IMR-90 (cell line): ENCODE measurements at regions of chr10 and their contacts with region 1.

Region 1: DNA sequence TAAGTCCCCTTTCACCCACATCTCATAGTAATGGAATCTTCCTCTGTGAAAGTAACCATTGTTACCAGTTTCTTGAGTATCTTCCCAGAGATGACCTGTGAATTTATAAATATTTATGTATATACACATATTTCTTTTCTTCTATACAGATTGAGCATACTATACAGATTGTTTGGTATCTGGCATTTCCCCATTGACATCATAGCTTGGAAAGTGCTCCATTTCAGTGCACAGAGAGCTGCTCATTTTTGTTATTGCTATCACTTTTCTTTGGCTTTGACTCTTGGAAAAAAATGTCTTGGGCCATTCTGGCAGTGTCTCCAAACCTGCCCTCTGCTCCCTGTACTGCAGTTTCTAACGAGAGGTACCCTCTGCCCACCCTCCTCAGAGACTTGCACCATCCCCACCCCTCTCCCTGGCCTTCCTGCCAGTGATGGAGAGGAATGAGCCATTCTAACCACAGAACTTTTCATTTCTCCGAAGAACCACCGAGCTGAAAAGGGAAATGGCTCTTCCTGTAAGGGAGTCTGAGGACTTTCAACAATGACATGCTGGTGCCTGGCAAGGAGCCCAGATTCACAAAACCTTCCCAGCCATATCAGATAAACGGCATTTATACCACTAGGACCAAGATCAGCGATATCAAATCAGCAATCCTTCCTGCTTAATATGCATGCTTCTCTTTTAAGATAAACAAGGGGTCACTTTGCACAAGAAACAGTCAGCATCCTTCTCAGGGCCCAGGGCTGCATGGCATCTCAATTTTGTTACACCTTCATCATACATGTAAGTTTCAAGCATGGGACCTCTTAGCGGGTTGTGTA is 19.7 kb upstream of the CCSER2 start:
- DNase-seq: peak; percentile 92
- ATAC-seq: peak; percentile 83
- H3K4me3 ChIP-seq: peak overlapping the region; percentile 12
- H3K27ac ChIP-seq: peak overlapping the region; percentile 89
- H3K4me1 ChIP-seq: peaks cover 24% of the 10 kb centered on the region
- H3K27me3 ChIP-seq: no peaks in the 10 kb centered on the region
- CTCF ChIP-seq: no peak
- POLR2A ChIP-seq: 0 out of 2 replicates have a peak, but pooled peaks have one; percentile 22
- RAD21 ChIP-seq: no peak

Region 2: DNA sequence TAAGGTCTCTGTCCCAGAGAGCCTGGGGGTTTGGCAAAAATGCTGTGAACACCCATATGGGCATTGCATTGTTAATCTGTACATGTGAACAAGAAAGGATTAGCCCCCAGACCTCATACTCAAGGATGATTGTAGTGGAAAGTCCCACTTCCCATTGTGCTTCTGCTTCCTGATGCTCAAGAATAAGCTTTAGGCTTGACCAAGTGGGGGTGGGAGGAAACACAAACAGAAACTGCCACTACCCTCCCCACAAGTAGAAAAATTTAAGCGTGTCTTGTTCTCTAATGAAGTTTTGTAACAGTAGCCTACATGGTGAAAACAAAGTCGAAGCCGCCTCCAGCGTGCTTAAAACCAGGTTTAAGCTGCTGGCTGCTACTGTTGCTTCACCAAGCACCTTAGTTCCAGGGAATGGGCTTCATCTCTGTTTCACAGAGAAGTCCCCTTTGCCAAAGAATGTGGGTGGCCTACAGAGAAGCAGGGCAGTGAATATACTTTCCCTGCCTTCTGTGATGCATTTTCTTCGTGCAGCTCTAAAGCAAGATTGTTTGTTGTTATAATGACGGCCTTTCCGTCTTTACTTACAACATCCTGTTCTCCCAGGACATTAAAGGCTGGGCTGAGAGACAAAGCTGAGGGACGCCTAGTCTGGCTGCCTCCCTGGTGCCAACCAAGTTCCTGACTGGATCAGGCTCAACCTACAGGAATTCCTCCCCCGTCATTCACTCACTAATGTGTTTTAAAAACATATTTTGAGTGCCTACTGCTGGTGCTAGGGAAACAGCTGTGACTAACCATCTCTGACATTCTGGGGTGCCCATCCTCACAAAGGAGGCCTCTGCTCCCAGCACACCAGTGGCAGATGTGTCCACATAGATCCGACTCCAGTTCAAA is 12.4 kb before region 1 on chr10:
- CTCF ChIA-PET with region 1: interaction called, 4 read pairs
- POLR2A ChIA-PET with region 1: no interaction called
- dilution Hi-C with region 1: no loop called
- in situ Hi-C with region 1: no loop called
- intact Hi-C with region 1: loop called (anchors 1 kb)
- DNase-seq: peak; percentile 98
- ATAC-seq: peak; percentile 94
- H3K4me3 ChIP-seq: no peak overlapping the region
- H3K27ac ChIP-seq: peak overlapping the region; percentile 62
- H3K4me1 ChIP-seq: peaks cover 13% of the 10 kb centered on the region
- H3K27me3 ChIP-seq: no peaks in the 10 kb centered on the region
- CTCF ChIP-seq: no peak
- POLR2A ChIP-seq: peak; percentile 73
- RAD21 ChIP-seq: peak; percentile 15

Region 3: DNA sequence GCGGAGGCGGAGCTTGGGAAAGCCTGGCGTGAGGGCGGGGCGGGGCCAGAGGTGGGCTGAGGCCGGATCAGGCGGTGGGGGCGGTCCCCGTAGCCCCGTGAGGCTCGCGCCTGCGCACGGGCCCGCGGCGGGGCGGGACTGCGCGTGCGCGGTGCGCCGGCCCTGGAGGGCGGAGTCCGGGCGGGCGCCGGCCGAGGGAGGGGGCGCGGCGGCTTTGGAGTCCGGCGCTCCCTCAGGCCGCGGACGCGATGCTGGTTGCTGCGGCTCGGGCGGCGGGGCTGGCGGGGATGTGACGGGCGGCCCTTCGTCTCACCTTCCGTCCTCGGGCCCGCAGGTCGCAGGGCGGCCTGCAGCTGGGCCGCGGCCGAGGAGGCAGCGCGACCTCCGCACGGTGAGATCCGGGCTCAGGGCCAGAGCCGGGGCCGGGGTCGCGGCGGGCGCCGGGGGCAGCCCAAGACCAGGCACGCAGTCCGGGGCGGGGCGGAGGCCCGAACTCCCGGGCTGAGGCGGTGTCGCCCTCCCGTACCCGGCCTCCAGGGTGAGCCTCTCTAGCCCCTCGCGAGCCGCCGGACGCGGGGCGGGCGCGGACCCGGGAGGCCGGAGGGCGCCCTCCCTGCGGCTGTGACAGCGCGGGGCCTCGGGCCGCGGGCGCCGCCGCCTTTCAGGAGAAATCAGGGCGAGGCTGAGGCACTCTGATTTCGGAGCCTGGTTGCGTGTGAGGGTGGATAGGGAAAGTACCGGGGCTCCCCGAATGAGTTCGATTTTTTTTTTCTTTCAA is 19.9 kb after region 1 on chr10 and contains the start of gene CCSER2:
- CTCF ChIA-PET with region 1: no interaction called
- POLR2A ChIA-PET with region 1: no interaction called
- dilution Hi-C with region 1: no loop called
- in situ Hi-C with region 1: no loop called
- intact Hi-C with region 1: loop called (anchors 1 kb)
- DNase-seq: no peak
- ATAC-seq: peak; percentile 94
- H3K4me3 ChIP-seq: peak within 1 kb of the TSS; percentile 96
- H3K27ac ChIP-seq: peak within 1 kb of the TSS; percentile 90
- H3K4me1 ChIP-seq: peaks cover 2% of the 10 kb centered on the region; the same call in 1 of the 2 replicates
- H3K27me3 ChIP-seq: no peaks in the 10 kb centered on the region
- CTCF ChIP-seq: no peak
- POLR2A ChIP-seq: peak; percentile 95
- RAD21 ChIP-seq: no peak
- total RNA-seq, gene CCSER2: 27.8 and 31.7 TPM in 2 replicates

Region 4: DNA sequence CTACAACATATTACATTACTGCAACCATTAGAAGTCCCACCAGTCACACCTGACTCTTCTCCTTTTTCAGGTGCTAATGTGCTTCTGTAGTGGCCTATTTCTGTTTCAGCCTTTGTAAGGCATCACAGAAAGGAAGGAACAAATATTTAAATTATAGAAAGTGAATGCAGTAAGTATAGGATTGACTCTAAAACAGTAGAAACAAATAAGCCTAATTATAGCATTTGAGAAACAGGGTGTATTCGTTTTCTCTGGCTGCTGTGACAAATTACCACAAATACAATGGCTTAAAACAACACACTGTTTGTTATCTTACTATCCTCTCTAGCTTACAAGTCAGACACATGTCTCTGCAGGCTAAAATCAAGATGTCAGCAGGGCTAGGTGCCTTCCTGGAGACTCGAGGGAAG is 89.0 kb after region 1 on chr10:
- CTCF ChIA-PET with region 1: no interaction called
- POLR2A ChIA-PET with region 1: no interaction called
- dilution Hi-C with region 1: no loop called
- in situ Hi-C with region 1: no loop called
- intact Hi-C with region 1: no loop called
- DNase-seq: no peak
- ATAC-seq: no peak
- H3K4me3 ChIP-seq: no peak overlapping the region
- H3K27ac ChIP-seq: no peak overlapping the region
- H3K4me1 ChIP-seq: peaks cover 2% of the 10 kb centered on the region; the same call in 1 of the 2 replicates
- H3K27me3 ChIP-seq: no peaks in the 10 kb centered on the region
- CTCF ChIP-seq: no peak
- POLR2A ChIP-seq: no peak
- RAD21 ChIP-seq: no peak

Region 5: DNA sequence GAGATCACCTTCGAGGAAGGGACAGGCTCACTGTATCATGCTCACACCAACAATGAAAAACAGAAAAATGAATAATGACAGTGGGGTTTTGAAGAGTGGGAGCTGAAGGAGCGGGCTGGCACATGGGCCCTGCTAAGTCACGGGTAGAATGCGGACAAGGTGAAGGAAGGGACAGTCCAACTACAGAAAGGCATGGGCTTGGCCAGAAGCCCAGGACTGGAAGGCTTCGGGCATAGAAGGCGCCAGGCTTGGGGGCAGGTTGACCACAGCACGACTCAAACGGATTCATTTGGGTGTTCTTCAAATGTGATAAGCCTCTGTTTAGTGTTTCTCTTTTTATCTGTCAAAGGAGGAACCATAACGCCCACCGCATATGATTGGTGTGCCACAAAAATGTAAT is 529.2 kb after region 1 on chr10:
- CTCF ChIA-PET with region 1: no interaction called
- POLR2A ChIA-PET with region 1: no interaction called
- dilution Hi-C with region 1: no loop called
- in situ Hi-C with region 1: no loop called
- intact Hi-C with region 1: no loop called
- DNase-seq: no peak
- ATAC-seq: no peak
- H3K4me3 ChIP-seq: no peak overlapping the region
- H3K27ac ChIP-seq: no peak overlapping the region
- H3K4me1 ChIP-seq: no peaks in the 10 kb centered on the region
- H3K27me3 ChIP-seq: no peaks in the 10 kb centered on the region
- CTCF ChIP-seq: no peak
- POLR2A ChIP-seq: no peak
- RAD21 ChIP-seq: no peak